ENCODE measurements at regions of chr2 and their contacts with region 1.

Region 1: DNA sequence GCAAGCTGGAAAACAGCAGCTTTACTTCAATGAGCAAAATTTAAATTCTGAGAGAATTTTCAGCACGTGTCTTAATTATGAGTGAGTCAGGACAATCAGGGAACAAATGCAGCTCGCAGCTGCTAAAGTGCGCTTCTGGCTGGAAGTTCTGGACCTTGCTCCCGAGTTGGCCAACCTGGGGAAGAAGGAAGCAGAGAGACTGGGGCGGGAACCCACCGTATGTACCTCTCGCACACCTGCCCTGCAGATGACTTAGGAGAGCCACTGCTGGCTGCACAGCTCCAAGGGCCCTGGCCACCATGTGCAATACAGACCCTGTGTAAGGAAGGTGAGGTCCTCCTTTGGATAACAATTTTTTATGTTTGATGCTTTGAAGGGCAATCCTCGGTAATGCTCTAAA is 42.4 kb downstream of the REEP1 start:
- DNase-seq: no peak

Region 2: DNA sequence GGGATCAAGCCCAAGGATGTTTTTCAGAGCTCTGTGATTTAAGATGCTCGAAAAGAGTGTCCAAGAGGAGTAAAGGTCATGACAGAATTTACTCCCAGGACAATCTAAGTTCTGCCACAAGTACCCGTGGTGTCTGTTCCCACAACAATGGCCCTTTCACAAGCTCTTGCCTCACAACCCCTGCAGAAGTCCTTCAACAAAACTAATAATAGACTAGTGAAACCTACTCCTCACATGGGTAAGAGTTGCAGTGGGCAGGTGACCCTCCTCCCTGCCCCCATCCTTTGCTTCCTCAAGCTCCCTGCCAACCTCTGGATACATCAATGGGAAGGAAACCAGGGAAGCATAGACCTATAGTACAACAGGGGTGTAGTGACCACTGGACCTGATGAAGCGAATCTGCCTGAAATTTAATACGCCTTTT is 154.1 kb before region 1 on chr2:
- intact Hi-C with region 1: no loop called
- DNase-seq: no peak

Region 3: GRCh38 chr2:86253424-86253823 is 41.6 kb before region 1 on chr2:
- intact Hi-C with region 1: loop called in 1 of 2 experiments (anchors 1 kb)
- DNase-seq: no peak

Measured in posterior vena cava (tissue), 2 donors.